IMR-90 (cell line): ENCODE measurements at regions of chr6 and their contacts with region 1.

Region 1: DNA sequence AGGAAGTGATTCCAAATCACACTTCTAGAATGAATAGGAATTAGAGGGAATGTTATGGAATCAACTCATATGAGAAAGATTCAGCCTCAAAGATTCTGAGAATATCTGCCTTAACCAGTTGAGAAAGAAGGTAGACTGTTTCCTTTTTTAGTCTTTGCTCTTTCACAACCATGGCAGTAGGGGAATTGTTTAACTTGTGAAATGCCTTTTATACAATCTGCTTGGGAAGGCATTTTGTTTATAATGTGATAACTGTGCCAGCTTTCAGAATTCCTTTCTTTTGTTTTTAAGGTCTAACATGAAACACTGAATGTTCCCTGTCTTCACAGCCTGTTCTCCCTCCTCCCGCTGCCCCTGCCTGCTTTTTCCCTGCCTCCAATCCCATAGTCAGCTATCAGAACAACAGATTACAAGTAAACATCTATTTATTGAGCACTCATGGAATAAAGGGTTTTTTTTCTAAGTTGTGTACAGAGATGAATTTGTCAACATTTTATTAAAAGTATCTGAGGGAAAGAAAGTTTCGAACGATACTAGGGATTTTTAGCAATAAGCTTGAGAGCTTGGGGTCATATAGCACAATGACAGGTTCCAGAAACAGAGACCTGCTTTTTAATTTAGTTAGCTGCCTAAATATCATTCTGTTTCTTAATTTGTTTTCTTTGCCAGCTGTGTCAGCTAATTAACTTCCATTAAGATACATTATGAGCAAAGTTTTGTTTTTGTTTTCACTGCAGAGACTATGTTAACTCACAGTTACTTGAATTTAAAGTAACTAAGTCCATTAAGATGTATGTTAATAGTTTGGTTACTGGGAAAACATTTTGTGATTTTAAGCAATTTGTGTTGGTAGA is 28.3 kb upstream of the FBXO30 start:
- DNase-seq: peak; percentile 44
- ATAC-seq: peak; percentile 61
- H3K4me3 ChIP-seq: no peak overlapping the region
- H3K27ac ChIP-seq: peak overlapping the region; percentile 30; the same call in 1 of the 2 replicates
- H3K4me1 ChIP-seq: peaks cover 4% of the 10 kb centered on the region
- H3K27me3 ChIP-seq: no peaks in the 10 kb centered on the region
- CTCF ChIP-seq: no peak
- POLR2A ChIP-seq: no peak
- RAD21 ChIP-seq: no peak

Region 2: DNA sequence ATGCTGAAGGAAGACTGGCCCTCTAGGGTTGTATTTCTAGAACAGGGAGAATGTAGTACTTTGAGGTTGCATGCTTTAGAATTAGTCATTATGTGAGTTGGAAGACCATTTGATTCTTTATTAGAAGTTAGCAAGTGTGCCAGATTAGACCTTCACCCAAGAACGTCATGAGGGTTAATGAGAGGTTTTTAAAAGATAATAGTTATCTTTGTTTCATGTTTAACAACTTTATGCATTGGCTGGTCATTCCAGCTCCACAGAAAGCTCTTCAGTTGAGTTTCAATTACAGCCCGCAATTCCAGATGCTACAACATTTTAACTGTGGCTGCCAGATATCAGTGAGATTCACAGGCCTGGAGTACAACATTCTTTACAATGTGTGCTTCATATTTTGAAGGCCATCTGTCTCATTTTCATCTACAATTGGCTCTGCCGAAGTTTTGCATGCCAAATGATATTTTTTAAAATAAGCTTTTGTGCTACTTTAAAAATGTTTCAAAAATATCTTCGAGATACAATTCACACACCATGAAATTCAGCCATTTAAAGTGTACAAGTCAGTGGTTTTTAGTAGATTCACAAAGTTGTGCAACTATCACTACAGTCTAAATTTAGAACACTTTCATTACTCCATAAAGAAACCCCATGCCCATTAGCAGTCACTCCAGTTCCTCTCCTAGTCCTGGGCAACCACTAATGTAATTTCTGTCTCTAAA is 32.7 kb after region 1 on chr6:
- CTCF ChIA-PET with region 1: no interaction called
- POLR2A ChIA-PET with region 1: no interaction called
- dilution Hi-C with region 1: no loop called
- in situ Hi-C with region 1: no loop called
- intact Hi-C with region 1: loop called (anchors 5 kb)
- DNase-seq: no peak
- ATAC-seq: no peak
- H3K4me3 ChIP-seq: no peak overlapping the region
- H3K27ac ChIP-seq: no peak overlapping the region
- H3K4me1 ChIP-seq: no peaks in the 10 kb centered on the region; the same call in 1 of the 2 replicates
- H3K27me3 ChIP-seq: no peaks in the 10 kb centered on the region
- CTCF ChIP-seq: no peak
- POLR2A ChIP-seq: no peak
- RAD21 ChIP-seq: no peak